ENCODE measurements at regions of chr5 and their contacts with region 1.

Region 1: GRCh38 chr5:23208959-23209431 is 298.4 kb upstream of the PRDM9 start:
- DNase-seq: no peak
- H3K4me3 ChIP-seq: no peak overlapping the region
- H3K27ac ChIP-seq: no peak overlapping the region
- H3K4me1 ChIP-seq: no peaks in the 10 kb centered on the region
- H3K27me3 ChIP-seq: no peaks in the 10 kb centered on the region
- CTCF ChIP-seq: no peak
- POLR2A ChIP-seq: no peak

Region 2: GRCh38 chr5:23064710-23065109 is 144.3 kb before region 1 on chr5:
- intact Hi-C with region 1: no loop called
- DNase-seq: no peak
- H3K4me3 ChIP-seq: no peak overlapping the region
- H3K27ac ChIP-seq: no peak overlapping the region
- H3K4me1 ChIP-seq: no peaks in the 10 kb centered on the region
- H3K27me3 ChIP-seq: no peaks in the 10 kb centered on the region
- CTCF ChIP-seq: no peak
- POLR2A ChIP-seq: no peak

Region 3: DNA sequence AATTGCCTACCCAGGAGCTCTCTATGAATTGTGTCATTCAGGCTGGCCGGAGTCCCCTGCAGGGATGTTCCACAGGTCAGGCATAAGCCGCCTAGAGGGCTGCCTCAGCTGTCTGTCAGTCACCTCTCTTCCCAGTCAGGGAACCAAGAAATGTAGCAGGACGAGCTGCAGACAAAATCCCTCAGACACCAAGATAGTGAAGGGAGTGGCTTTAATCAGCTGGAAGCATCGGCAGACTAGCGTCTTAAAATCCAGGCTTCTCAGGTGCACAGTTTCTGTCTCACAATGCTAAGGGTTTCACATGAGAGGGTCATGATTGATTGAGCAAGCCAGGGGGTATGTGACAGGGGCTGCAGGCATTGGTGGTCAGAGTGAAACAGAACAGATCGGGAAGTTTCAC is 1188.6 kb after region 1 on chr5:
- intact Hi-C with region 1: loop called (anchors 5 kb)
- DNase-seq: no peak
- H3K4me3 ChIP-seq: no peak overlapping the region
- H3K27ac ChIP-seq: no peak overlapping the region
- H3K4me1 ChIP-seq: no peaks in the 10 kb centered on the region
- H3K27me3 ChIP-seq: no peaks in the 10 kb centered on the region
- CTCF ChIP-seq: no peak
- POLR2A ChIP-seq: no peak